ENCODE measurements at regions of chr17 and their contacts with region 1.

Region 1: DNA sequence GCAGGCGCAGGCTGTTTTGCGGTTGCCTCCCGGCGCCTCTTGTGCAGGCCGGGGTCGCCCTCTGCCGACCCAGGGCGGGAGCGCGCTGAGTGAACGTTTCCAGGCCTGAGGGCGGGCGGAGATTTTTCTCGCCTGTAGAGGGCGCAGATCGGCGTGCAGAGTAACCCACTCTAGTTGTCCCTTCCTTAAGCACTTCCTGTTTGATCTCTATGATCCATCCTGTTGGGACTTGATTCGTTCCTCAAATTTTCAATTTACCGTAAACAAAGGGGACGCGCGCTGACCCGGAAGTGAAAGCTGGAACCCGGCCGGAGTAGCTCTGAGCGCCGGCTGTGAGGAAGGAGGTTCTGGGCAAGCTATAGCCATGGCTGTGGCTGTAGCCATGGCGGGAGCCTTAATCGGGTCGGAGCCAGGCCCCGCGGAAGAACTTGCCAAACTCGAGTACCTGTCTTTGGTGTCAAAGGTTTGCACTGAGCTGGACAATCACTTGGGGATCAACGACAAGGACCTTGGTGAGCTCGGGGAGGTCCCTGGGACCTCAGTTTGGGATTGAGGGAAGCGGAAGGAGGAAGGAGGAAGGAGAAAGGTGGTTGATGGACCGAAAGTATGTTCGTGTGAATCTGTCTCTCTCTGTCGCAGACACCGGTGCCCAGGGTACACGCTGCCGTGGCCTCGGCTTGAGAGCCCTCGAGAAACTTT is at the start of gene DHX8:
- DNase-seq: peak; percentile 99
- H3K4me3 Mint-ChIP-seq: peak within 1 kb of the TSS; percentile 96
- H3K27ac Mint-ChIP-seq: peak within 1 kb of the TSS; percentile 92
- H3K4me1 Mint-ChIP-seq: peaks cover 27% of the 10 kb centered on the region
- H3K27me3 Mint-ChIP-seq: no peaks in the 10 kb centered on the region
- total RNA-seq, gene DHX8: 46.2 to 46.3 TPM

Region 2: GRCh38 chr17:43338886-43339516 is 144.8 kb before region 1 on chr17:
- CTCF ChIA-PET with region 1: interaction called, 6 read pairs
- intact Hi-C with region 1: loop called (anchors 2 kb)
- DNase-seq: peak; percentile 82
- H3K4me3 Mint-ChIP-seq: no peak overlapping the region
- H3K27ac Mint-ChIP-seq: no peak overlapping the region
- H3K4me1 Mint-ChIP-seq: peaks cover 31% of the 10 kb centered on the region
- H3K27me3 Mint-ChIP-seq: no peaks in the 10 kb centered on the region

Region 3: DNA sequence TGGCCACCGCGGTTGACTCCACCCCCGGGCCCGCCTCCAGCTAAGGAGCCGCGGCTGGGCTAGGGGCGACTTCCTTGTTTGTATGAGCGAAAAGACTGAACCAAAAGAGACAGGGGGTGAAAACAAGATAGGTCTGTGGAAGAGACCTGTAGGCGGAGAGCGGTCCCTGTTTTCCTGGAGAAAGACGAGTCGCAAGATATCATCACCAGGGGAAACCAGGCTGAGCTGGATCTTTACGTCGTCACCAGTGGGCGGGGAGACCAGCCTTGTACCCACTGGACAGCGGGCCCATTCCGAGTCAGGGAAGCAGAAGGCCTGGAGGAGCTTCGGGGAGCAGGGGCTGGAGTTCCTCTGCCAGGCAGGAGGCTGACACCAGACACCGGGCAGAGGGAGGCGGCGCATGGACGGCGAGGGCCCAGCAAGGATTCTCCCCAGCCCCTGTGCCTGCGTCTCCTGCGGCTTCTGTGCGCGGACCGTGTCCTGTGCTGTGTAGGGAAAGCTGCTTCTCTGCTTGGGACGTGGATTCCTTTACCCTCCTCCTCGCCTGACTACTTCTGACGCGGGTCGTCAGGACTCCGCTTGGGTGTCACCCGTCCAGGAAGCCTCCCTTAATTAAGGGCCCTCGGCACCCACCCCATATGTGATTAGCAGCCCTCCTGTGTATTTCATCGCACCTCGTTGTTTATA is 95.3 kb before region 1 on chr17:
- CTCF ChIA-PET with region 1: interaction called, 192 read pairs
- intact Hi-C with region 1: loop called (anchors 1 kb)
- DNase-seq: peak; percentile 92
- H3K4me3 Mint-ChIP-seq: peak overlapping the region; percentile 82
- H3K27ac Mint-ChIP-seq: peak overlapping the region; percentile 93
- H3K4me1 Mint-ChIP-seq: peaks cover 13% of the 10 kb centered on the region
- H3K27me3 Mint-ChIP-seq: no peaks in the 10 kb centered on the region

Region 4: GRCh38 chr17:43406676-43407645 is 76.9 kb before region 1 on chr17:
- CTCF ChIA-PET with region 1: interaction called, 11 read pairs
- intact Hi-C with region 1: no loop called
- DNase-seq: no peak
- H3K4me3 Mint-ChIP-seq: no peak overlapping the region
- H3K27ac Mint-ChIP-seq: no peak overlapping the region
- H3K4me1 Mint-ChIP-seq: no peaks in the 10 kb centered on the region
- H3K27me3 Mint-ChIP-seq: no peaks in the 10 kb centered on the region

Region 5: GRCh38 chr17:43536236-43536992 is 52.6 kb after region 1 on chr17:
- CTCF ChIA-PET with region 1: no interaction called
- intact Hi-C with region 1: no loop called
- DNase-seq: no peak
- H3K4me3 Mint-ChIP-seq: no peak overlapping the region
- H3K27ac Mint-ChIP-seq: no peak overlapping the region
- H3K4me1 Mint-ChIP-seq: peaks cover 4% of the 10 kb centered on the region
- H3K27me3 Mint-ChIP-seq: no peaks in the 10 kb centered on the region

Region 6: DNA sequence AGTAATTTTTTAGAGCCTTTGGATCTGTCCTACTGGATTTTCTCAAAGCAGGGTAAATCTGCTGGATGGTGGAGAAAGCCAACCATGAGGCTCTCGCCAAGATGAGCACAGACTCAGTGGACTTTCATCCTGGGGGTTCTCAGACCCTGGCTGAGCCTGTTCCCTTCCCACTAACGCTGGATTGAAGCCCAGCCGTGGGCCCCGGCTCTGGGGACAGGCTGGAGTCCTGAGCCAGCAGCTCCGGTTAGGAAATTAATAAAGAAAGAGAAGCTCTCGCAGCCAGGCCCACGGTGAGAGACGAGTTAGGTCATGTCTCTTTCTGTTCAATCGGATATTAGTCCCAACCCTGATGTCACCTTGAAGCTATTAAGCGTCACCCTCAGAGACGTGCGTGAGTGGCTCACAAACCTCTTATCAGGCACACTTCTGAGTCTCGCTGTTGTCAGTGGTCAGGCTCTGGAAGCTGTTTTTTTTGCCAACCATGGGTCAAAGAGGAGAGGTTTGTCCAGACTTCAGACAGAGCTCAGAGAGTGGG is 150.8 kb after region 1 on chr17:
- CTCF ChIA-PET with region 1: no interaction called
- intact Hi-C with region 1: no loop called
- DNase-seq: no peak
- H3K4me3 Mint-ChIP-seq: no peak overlapping the region
- H3K27ac Mint-ChIP-seq: no peak overlapping the region
- H3K4me1 Mint-ChIP-seq: peaks cover 3% of the 10 kb centered on the region
- H3K27me3 Mint-ChIP-seq: peaks cover under 1% of the 10 kb centered on the region

Region 7: DNA sequence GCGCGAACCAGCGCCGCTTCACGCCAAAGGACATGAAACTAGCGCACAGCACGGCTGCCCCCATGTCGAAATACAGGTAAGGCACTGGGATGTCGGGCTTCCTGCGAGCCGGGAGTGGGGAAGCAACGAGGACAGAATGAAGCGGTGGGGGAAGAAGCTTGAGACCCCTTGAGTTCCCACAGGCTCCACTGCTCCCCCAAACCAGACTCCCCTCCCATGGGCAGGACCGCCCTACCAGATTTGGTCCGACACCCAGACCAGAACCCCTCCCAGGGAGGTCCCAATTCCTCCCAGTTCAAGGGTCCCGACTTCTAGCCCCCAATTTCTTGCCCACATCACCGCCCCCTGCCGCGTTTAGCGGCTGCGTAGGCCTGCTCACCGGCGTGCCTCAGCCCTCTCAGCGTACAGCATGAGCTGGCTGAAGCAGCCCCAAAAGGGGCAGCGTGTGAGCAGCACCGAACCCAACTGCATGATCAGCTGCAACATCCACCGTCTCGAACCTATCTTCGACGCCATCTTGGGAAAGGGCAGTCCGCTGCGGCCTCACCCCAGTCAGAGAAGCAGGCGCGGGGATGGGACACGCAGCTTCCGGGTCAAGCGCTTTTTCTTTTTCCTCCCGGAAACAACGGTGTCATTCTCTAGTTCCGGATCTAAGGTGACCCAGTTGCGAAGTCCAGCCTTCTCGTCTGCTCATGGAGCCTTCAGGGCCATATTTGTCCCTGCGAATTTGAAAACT is 530.8 kb after region 1 on chr17 and contains the start of gene TMEM101:
- CTCF ChIA-PET with region 1: no interaction called
- intact Hi-C with region 1: loop called (anchors 10 kb)
- DNase-seq: peak; percentile 93
- H3K4me3 Mint-ChIP-seq: peak within 1 kb of the TSS; percentile 100
- H3K27ac Mint-ChIP-seq: peak within 1 kb of the TSS; percentile 90
- H3K4me1 Mint-ChIP-seq: peaks cover 12% of the 10 kb centered on the region
- H3K27me3 Mint-ChIP-seq: no peaks in the 10 kb centered on the region
- total RNA-seq, gene TMEM101: 25.6 to 26.7 TPM

Measured in activated naive CD4-positive, alpha-beta T cell treated with anti-CD3 and anti-CD28 coated beads for 36 hours (primary cell).